Activated naive CD4-positive, alpha-beta T cell treated with anti-CD3 and anti-CD28 coated beads for 36 hours (primary cell): ENCODE measurements at regions of chr17 and their contacts with region 1.

Region 1: DNA sequence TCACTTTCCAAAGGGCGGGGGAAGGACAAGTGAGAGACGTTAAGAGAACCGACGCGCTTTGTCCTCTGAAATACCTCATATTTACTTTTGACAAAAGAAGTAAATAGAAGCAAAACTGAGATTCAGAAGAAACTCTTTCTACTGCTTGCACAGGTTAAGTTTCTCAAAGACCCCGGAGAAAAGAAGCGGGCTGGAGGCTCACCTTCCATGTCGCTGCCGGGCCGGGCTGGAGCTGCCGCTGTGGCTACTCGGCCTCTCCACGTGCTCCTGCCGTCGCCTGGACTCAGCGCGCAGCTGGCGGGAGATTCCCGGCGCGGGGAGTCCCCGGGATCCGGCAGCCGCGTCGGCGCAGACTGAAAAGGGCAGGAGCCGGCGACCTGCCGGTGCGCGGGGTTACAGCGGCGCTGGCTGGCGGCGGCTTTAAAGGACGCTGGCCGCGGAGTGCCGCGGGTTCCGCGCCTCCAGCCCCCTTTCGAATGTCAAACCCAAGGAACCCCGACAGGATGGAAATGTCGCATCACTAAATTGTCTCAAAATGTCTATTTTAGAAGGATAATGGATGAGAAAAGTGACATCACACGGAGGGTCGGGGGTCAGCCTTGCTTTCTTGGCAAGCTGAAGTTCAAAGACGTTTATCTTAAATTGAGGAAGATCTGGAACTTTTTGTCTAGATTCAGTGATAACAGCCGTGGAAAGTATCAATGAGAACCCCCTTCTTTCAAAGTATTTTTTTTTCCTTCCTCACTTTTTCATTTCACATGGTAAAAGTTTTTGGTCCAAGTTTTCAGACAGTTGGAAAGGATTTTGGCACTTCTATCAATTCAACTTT is at the start of gene IKZF3:
- DNase-seq: peak; percentile 94
- H3K4me3 Mint-ChIP-seq: peak within 1 kb of the TSS; percentile 92
- H3K27ac Mint-ChIP-seq: peak within 1 kb of the TSS; percentile 95
- H3K4me1 Mint-ChIP-seq: peaks cover 61% of the 10 kb centered on the region
- H3K27me3 Mint-ChIP-seq: no peaks in the 10 kb centered on the region
- total RNA-seq, gene IKZF3: 34.2 to 36.1 TPM

Region 2: DNA sequence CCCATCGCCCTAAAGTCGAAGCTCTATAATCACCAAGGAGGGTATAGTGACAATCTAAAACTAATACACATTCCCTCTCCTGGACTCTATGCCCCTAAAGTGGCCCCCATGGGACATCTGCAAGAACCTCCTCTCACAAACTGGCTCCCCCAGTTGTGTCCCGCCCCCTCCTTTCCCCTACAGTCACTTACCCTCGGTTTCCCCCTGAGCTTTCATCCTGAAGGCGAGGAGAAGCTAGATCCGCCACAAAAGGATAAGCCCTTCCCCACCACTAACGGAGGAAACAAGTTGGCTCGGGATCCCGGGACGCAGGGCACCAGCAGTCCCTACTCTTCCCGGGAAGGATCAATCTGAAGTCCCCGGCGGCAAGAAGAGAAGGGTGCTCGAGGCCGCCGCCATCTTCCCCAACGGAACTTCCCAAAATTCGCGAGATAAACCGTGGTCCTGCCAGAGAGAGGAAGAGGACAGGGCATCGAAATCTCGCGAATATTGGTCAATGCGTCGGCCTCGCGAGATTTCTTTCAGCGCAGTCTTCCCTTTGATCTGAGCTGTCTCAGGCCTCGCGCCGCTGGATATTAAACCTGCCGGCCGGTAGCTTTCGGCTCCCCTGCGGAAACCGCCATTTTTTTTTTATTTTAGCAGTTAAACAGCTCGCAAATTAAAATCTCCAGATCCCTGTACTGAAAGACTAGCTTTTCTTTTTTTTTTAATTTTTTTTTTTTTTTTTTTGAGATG is 413.1 kb before region 1 on chr17 and contains the start of gene MED1:
- CTCF ChIA-PET with region 1: no interaction called
- intact Hi-C with region 1: no loop called
- DNase-seq: peak; percentile 96
- H3K4me3 Mint-ChIP-seq: peak within 1 kb of the TSS; percentile 95
- H3K27ac Mint-ChIP-seq: peak within 1 kb of the TSS; percentile 95
- H3K4me1 Mint-ChIP-seq: peaks cover 42% of the 10 kb centered on the region
- H3K27me3 Mint-ChIP-seq: no peaks in the 10 kb centered on the region
- total RNA-seq, gene MED1: 52.4 to 56.1 TPM

Region 3: GRCh38 chr17:39636927-39637736 is 227.0 kb before region 1 on chr17 and contains the start of gene STARD3:
- CTCF ChIA-PET with region 1: no interaction called
- intact Hi-C with region 1: loop called (anchors 1 kb)
- DNase-seq: peak; percentile 94
- H3K4me3 Mint-ChIP-seq: peak within 1 kb of the TSS; percentile 92
- H3K27ac Mint-ChIP-seq: peak within 1 kb of the TSS; percentile 93
- H3K4me1 Mint-ChIP-seq: peaks cover 49% of the 10 kb centered on the region
- H3K27me3 Mint-ChIP-seq: no peaks in the 10 kb centered on the region
- total RNA-seq, gene STARD3: 56.1 to 56.8 TPM

Region 4: DNA sequence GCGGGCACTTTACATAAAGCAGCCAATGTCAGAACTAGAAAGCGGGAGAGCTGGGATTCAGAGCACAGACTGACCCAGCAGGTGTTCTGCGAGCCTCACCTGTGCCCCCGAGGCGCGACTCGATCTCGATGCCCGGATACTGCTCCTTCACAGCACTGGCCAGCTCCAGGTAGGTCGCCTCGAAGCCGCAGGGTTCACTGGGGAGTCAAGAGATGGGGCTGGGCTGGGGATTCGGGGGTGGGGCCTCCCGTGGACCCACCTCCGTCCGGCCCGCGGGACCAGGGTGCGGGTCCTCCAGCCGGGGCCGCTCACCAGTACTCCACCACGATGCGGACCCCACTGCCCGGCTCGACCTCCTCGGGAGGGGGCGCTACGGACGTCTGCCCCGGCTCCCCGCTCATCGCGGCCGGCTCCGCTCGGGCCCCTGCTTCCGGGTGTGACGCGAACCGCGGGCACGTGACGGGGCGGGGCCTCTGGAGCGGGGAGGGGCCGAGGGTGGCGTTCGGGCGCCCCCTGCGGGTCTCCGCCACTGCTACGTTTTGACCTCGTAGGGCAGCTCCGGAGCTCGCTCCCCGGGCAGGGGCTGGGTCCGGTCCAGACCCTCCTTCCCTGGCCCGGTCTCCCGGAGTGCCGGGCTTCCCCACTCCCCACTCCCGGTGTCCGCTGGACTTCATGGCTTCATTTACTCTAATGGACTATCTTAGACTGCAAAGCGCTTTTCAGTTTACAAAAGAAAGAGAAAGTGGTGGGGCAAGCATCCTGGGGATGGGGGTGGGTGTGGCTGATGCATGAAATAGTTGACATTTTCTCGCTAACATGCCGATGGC is 133.8 kb before region 1 on chr17 and contains the start of gene MIEN1:
- CTCF ChIA-PET with region 1: interaction called, 7 read pairs
- intact Hi-C with region 1: loop called (anchors 1 kb)
- DNase-seq: peak; percentile 95
- H3K4me3 Mint-ChIP-seq: peak within 1 kb of the TSS; percentile 87
- H3K27ac Mint-ChIP-seq: peak within 1 kb of the TSS; percentile 84
- H3K4me1 Mint-ChIP-seq: peaks cover 14% of the 10 kb centered on the region
- H3K27me3 Mint-ChIP-seq: no peaks in the 10 kb centered on the region
- total RNA-seq, gene MIEN1: 35.2 to 36.5 TPM

Region 5: DNA sequence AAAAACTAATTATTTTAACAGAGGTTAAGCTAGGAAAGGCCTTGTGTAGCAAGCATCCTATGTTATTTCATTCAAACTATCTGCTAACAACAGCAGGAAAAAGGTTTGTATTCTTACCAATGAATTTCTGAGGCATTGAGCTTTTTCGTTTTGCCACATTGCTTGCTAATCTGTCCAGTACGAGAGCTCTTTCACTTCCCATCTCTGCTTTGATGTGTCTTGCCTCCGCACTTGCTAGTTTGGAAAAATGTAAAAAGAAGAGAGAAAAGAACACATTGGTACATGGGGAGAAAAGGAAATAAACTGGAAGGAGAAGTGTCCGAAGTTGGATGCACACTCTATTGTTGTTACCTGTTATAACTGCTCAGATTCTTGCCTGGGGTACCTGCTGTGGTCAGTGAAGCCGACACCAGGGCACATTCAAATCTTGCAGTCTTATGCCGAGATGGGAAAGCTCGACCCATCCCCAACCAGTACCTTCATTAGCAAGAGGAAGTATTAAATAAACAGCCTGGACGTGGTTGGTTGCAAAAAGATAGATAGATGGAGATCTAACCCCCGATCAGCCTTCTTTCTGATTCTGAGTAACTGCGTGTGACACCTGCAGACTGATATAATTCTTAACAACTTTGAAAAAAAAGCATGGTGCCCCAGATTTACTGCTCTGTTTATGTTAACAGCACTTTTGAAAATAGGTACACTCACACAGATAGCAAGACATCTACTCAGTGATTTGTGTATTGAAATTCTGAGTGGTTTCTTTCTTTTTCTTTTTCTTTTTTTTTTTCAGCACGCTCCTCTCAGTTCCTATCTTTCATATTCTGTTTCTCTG is 86.4 kb before region 1 on chr17:
- CTCF ChIA-PET with region 1: interaction called, 3 read pairs
- intact Hi-C with region 1: loop called (anchors 1 kb)
- DNase-seq: peak; percentile 34
- H3K4me3 Mint-ChIP-seq: peak overlapping the region; percentile 74
- H3K27ac Mint-ChIP-seq: peak overlapping the region; percentile 86
- H3K4me1 Mint-ChIP-seq: peaks cover 83% of the 10 kb centered on the region
- H3K27me3 Mint-ChIP-seq: no peaks in the 10 kb centered on the region

Region 6: GRCh38 chr17:39822051-39822451 is 42.1 kb before region 1 on chr17:
- CTCF ChIA-PET with region 1: interaction called, 6 read pairs
- intact Hi-C with region 1: loop called (anchors 1 kb)
- DNase-seq: peak; percentile 49
- H3K4me3 Mint-ChIP-seq: no peak overlapping the region
- H3K27ac Mint-ChIP-seq: no peak overlapping the region
- H3K4me1 Mint-ChIP-seq: peaks cover 52% of the 10 kb centered on the region
- H3K27me3 Mint-ChIP-seq: no peaks in the 10 kb centered on the region

Region 7: GRCh38 chr17:39927101-39927928 is 63.2 kb after region 1 on chr17 and contains the starts of genes LRRC3C and ORMDL3:
- CTCF ChIA-PET with region 1: no interaction called
- intact Hi-C with region 1: loop called (anchors 2 kb)
- DNase-seq: peak; percentile 94
- H3K4me3 Mint-ChIP-seq: peak within 1 kb of the TSS; percentile 98
- H3K27ac Mint-ChIP-seq: peak within 1 kb of the TSS; percentile 94
- H3K4me1 Mint-ChIP-seq: peaks cover 56% of the 10 kb centered on the region
- H3K27me3 Mint-ChIP-seq: no peaks in the 10 kb centered on the region
- total RNA-seq, gene LRRC3C: not detected
- total RNA-seq, gene ORMDL3: 51.8 to 52.1 TPM